Spleen (tissue), 13 donors: ENCODE measurements at regions of chr12 and their contacts with region 1.

Region 1: DNA sequence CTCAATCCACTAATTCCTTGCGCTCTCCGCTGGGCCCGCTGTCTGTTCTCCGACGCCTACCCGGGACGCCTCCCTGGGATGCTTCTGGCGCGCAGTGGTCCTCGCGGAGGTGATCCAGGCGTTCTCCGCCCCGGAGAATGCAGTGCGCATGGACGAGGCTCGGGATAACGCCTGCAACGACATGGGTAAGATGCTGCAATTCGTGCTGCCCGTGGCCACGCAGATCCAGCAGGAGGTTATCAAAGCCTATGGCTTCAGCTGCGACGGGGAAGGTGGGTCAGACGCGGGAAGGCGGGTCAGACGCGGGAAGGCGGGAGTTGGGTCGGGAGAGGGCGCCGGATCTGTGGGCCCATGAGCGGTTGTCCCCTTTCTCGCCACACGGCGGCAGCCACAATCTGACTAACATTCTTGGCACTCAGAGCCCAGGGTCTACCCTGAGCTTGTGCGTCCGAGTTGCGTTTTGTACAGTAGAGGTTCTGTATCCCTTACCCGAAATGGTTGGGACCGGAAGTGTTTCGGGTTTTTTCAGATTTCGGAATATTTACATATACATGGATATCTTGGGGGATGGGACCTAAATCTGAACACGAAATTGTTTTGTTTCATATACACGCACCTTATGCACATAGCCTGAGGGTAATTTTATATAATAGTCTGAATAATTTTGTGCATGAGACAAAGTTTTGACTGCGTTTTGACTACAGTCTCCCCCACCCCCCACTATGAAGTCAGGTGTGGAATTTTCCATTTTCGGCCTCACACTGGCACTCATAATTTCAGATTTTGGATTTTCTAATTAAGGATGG is 762 bp downstream of the C12orf57 start:
- DNase-seq: peak; percentile 96
- H3K4me3 ChIP-seq: peak overlapping the region; percentile 47 to 81 (median 73)
- H3K27ac ChIP-seq: peak overlapping the region; percentile 92 to 99 (median 96)
- H3K4me1 ChIP-seq: peaks cover 48 to 84% (median 70%) of the 10 kb centered on the region in 6 donors
- H3K27me3 ChIP-seq: no peaks in the 10 kb centered on the region
- CTCF ChIP-seq: peak; percentile 89 to 98 (median 95)
- POLR2A ChIP-seq: peak in 1 of 3 donors; percentile 4

Region 2: DNA sequence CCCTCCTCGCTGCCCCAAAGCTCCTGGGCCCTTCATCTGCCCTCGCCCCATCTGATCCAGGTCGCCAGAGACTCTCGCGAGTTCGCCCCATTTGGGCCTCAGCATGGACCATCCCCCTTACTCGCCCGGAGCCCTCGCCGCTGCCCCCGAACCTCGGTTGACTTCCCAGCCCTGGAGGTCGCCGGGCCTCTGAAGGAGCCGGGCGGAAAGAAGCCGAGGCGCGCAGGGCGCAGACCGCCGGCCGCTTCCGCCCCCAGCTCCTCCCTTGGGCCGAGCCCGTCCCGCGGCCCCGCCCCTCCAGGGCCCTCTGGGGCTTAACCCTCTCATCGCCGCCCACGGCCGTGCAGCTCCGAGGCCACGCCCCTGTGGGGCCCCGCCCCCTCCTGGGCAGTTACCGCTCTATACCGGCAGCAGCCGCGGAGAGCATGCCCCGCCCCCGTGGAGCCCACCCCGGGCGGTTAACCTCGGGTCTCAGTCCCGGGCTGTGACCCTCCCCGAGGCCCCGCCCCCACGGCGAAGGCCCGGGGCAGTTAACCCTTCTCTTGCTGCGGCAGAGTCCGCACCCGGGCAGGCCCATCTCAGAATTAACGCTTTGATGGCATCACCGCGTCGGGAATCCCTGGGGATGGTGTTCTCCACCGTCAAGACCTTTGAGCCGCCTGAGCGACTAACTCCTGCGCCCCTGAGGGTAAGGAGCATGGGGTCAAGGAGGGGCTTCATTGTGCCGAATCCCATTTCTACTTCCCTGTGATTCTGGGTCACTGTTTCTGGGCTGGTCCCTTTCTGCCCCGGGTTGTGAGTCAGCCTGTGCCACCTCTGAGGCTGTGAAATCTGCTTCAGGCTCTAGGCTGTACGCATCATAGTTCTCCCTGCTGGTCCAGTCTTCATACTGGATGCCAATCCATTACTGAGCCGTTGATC is 71.2 kb before region 1 on chr12 and contains the start of gene SPSB2:
- intact Hi-C with region 1: no loop called
- DNase-seq: peak; percentile 100
- H3K4me3 ChIP-seq: peak within 1 kb of the TSS; percentile 71 to 97 (median 92)
- H3K27ac ChIP-seq: peak within 1 kb of the TSS; percentile 77 to 99 (median 90)
- H3K4me1 ChIP-seq: peaks cover 28 to 68% (median 54%) of the 10 kb centered on the region in 6 donors
- H3K27me3 ChIP-seq: no peaks in the 10 kb centered on the region
- CTCF ChIP-seq: peak in 7 of 11 experiments; percentile 15 to 50 (median 25)
- POLR2A ChIP-seq: peak in 2 of 3 donors; percentile 47 to 66
- total RNA-seq, gene SPSB2: 7.0 to 12.9 (median 10.3) TPM

Region 3: DNA sequence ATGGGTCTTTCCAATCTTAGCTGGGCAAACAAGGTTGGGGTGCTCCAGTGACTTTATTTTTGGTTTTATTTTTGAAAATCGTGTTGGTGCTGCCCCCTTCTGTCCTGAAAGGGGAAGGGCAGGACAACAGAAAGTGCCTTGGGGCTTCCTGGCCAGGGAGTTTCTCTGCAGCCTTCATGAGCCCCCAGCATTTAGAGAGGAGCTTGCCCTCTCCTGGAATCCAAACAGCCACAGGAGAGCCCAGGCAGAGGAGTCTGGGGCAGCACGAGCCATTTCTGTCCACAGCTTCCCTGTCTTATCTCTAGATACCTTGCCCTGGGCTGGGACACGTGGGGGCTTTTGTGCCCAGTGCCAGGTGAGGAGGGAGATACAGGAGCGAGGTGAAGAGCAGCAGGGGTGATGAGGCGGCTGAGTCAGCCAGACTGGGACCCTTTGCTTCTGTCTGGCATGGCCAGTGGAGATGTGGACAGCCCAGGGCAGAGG is 168.8 kb after region 1 on chr12:
- intact Hi-C with region 1: loop called (anchors 10 kb)
- DNase-seq: no peak
- H3K4me3 ChIP-seq: no peak overlapping the region
- H3K27ac ChIP-seq: peak overlapping the region in 5 of 8 donors; percentile 33 to 97 (median 52)
- H3K4me1 ChIP-seq: peaks cover 16 to 54% (median 37%) of the 10 kb centered on the region in 6 donors
- H3K27me3 ChIP-seq: no peaks in the 10 kb centered on the region
- CTCF ChIP-seq: peak; percentile 66 to 97 (median 93)
- POLR2A ChIP-seq: no peak